Adrenal gland (tissue), 19 donors: ENCODE measurements at regions of chr2 and their contacts with region 1.

Region 1: DNA sequence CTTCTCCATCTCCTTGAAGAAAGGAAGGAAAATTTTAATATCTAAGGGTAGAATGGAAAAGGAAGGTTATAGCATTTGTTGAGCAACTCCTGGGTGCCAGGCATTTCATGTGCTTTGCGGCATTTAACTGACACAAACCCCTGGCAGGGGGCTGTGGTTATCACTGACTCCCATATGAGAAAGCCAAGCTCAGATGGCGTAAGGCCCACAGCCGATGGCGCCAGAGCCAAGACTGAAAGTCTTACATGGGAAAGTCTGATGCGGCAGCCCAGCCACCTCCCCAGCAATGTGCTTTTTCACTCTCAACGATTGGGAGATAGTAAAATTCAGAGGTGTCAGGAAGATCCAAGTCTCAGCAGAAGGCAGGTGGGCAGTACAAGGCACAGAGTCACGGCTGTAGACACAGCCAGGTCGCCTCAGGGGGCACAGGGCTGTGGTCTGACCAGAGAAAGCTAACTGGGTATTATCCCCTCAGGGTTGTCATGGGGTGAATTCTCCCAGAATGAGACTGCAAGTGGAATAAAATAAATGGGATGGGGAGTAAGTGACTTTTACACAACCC is 324.2 kb upstream of the NCKAP5 start:
- DNase-seq: no peak
- H3K4me3 ChIP-seq: no peak overlapping the region
- H3K27ac ChIP-seq: no peak overlapping the region
- H3K4me1 ChIP-seq: no peaks in the 10 kb centered on the region
- H3K27me3 ChIP-seq: no peaks in the 10 kb centered on the region
- CTCF ChIP-seq: no peak
- POLR2A ChIP-seq: no peak

Region 2: DNA sequence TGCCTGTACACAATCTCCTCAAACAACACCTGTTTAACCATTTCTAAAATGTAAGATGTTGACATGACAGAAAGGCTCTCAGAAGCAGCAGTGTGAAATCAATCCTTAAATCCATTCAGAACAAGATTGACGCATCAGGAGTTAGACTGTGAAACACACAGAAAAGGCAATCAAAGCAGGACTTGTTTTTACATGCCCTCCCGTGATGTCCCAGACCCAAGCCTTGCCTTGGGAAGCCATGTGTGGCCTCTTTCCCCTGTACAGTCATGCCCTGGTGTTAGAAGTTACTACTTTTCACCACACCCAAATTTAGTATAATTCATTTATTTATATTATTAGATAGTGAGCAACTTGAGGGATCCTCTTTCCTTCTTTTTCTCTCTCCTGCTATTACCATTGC is 439.9 kb before region 1 on chr2:
- intact Hi-C with region 1: no loop called
- DNase-seq: no peak
- H3K4me3 ChIP-seq: no peak overlapping the region
- H3K27ac ChIP-seq: no peak overlapping the region
- H3K4me1 ChIP-seq: no peaks in the 10 kb centered on the region
- H3K27me3 ChIP-seq: no peaks in the 10 kb centered on the region
- CTCF ChIP-seq: no peak
- POLR2A ChIP-seq: no peak

Region 3: DNA sequence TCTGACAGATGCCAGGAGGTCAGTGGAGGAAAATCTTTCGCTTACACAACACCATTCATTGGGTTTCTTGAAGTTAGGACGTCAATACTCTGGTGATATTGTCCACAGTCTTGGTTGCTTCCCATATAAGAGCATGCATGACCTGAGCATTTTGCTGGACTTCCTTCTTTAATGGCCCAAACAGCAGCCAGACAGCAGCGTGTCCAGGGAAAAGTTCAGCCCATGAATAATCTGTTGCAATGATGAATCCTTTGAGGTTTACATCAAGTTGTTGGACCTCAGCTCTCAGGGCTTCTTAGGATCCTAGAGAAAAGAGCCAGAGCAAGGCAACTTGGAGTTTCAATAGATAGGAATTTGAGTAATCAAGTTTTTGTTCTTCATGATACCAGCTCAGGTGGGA is 205.9 kb after region 1 on chr2:
- intact Hi-C with region 1: loop called in 1 of 2 experiments (anchors 10 kb)
- DNase-seq: no peak
- H3K4me3 ChIP-seq: no peak overlapping the region
- H3K27ac ChIP-seq: no peak overlapping the region
- H3K4me1 ChIP-seq: no peaks in the 10 kb centered on the region
- H3K27me3 ChIP-seq: no peaks in the 10 kb centered on the region
- CTCF ChIP-seq: no peak
- POLR2A ChIP-seq: no peak